Naive thymus-derived CD4-positive, alpha-beta T cell (primary cell): ENCODE measurements at regions of chr1 and their contacts with region 1.

Region 1: GRCh38 chr1:212291505-212292134 is 6.4 kb downstream of the PPP2R5A start:
- DNase-seq: peak in 7 of 9 donors; percentile 34 to 60 (median 43)
- ATAC-seq: peak; percentile 90
- H3K4me3 ChIP-seq: no peak overlapping the region
- H3K4me3 Mint-ChIP-seq: peak overlapping the region; percentile 30 to 98 (median 67)
- H3K27ac ChIP-seq: no peak overlapping the region
- H3K27ac Mint-ChIP-seq: peak overlapping the region in 7 of 9 donors; percentile 6 to 70 (median 38)
- H3K4me1 ChIP-seq: peaks cover 48 to 74% of the 10 kb centered on the region in 2 donors
- H3K4me1 Mint-ChIP-seq: peaks cover 55 to 91% (median 82%) of the 10 kb centered on the region in 7 donors
- H3K27me3 ChIP-seq: no peaks in the 10 kb centered on the region
- H3K27me3 Mint-ChIP-seq: no peaks in the 10 kb centered on the region

Region 2: DNA sequence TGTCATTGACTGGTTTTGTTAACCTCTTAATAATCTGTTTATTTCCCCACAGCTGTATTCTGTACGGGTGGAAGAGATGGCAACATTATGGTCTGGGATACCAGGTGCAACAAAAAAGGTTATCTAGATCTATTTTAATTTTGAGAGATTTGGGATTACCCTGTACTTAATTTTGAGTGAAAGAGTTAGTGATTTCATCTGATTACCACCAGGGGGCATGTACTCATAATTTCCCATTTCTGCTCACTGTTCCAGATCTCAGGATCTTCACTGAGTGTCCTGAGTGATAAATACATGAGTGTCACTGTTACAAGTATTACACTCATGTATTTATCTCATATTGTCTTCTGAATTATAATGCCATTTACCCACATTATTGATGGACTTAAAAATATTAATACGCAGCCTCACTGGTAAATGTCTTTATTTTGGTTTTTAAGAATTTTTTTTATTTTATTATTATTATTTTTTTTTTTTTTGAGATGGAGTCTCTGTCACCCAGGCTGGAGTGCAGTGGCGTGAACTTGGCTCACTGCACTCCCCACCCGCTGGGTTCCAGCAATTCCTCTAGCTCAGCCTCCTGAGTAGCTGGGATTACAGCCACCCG is 228.7 kb before region 1 on chr1:
- CTCF ChIA-PET with region 1: interaction called, 15 read pairs
- POLR2A ChIA-PET with region 1: interaction called, 5 read pairs
- intact Hi-C with region 1: loop called (anchors 1 to 2 kb)
- DNase-seq: peak in 6 of 9 donors; percentile 8 to 41 (median 33)
- ATAC-seq: peak; percentile 71
- H3K4me3 ChIP-seq: no peak overlapping the region
- H3K4me3 Mint-ChIP-seq: no peak overlapping the region
- H3K27ac ChIP-seq: no peak overlapping the region
- H3K27ac Mint-ChIP-seq: no peak overlapping the region
- H3K4me1 ChIP-seq: no peaks in the 10 kb centered on the region
- H3K4me1 Mint-ChIP-seq: peaks cover 0 to 11% (median 0%) of the 10 kb centered on the region in 7 donors
- H3K27me3 ChIP-seq: no peaks in the 10 kb centered on the region
- H3K27me3 Mint-ChIP-seq: no peaks in the 10 kb centered on the region

Region 3: GRCh38 chr1:212070720-212071302 is 220.8 kb before region 1 on chr1:
- CTCF ChIA-PET with region 1: interaction called, 50 read pairs
- POLR2A ChIA-PET with region 1: interaction called, 14 read pairs
- intact Hi-C with region 1: loop called (anchors 1 kb)
- DNase-seq: peak in 7 of 9 donors; percentile 11 to 63 (median 47)
- ATAC-seq: peak; percentile 66
- H3K4me3 ChIP-seq: no peak overlapping the region
- H3K4me3 Mint-ChIP-seq: no peak overlapping the region
- H3K27ac ChIP-seq: no peak overlapping the region
- H3K27ac Mint-ChIP-seq: no peak overlapping the region
- H3K4me1 ChIP-seq: no peaks in the 10 kb centered on the region
- H3K4me1 Mint-ChIP-seq: peaks cover 0 to 7% (median 0%) of the 10 kb centered on the region in 7 donors
- H3K27me3 ChIP-seq: no peaks in the 10 kb centered on the region
- H3K27me3 Mint-ChIP-seq: no peaks in the 10 kb centered on the region

Region 4: DNA sequence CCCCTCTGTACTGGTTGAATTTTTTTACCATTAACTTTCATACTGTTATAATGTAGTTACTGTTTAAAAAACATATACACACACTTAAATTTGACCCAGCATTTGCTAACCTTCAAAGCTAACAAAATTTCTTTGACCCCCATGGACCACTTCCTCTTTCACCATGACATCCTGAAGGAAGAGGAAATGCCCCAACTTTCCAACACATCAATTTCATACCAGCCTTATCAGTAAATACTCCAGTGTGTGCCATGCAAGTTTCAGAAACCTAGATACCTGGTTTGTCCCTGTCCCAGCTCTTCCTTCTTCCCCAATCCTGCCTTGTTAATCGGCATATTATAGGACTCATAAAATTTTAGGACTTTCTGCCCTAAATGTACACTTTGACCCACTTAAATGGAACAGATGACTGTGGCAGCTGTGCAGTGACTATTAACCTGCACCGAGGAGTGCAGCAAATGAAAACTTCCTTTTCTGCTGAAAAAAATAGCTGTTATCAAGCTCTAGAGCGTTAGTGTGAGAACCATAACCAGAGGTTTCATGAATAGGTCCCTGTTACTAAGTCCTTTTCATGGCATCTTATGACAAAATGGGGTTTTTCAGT is 202.0 kb before region 1 on chr1:
- CTCF ChIA-PET with region 1: no interaction called
- POLR2A ChIA-PET with region 1: no interaction called
- intact Hi-C with region 1: no loop called
- DNase-seq: no peak
- ATAC-seq: no peak
- H3K4me3 ChIP-seq: no peak overlapping the region
- H3K4me3 Mint-ChIP-seq: peak overlapping the region in 1 of 10 donors; percentile 0
- H3K27ac ChIP-seq: no peak overlapping the region
- H3K27ac Mint-ChIP-seq: peak overlapping the region in 3 of 9 donors; percentile 0 to 64 (median 5)
- H3K4me1 ChIP-seq: no peaks in the 10 kb centered on the region
- H3K4me1 Mint-ChIP-seq: peaks cover 6 to 25% (median 12%) of the 10 kb centered on the region in 7 donors
- H3K27me3 ChIP-seq: no peaks in the 10 kb centered on the region
- H3K27me3 Mint-ChIP-seq: no peaks in the 10 kb centered on the region

Region 5: GRCh38 chr1:212110617-212111016 is 181.0 kb before region 1 on chr1:
- CTCF ChIA-PET with region 1: no interaction called
- POLR2A ChIA-PET with region 1: no interaction called
- intact Hi-C with region 1: no loop called
- DNase-seq: no peak
- ATAC-seq: no peak
- H3K4me3 ChIP-seq: no peak overlapping the region
- H3K4me3 Mint-ChIP-seq: no peak overlapping the region
- H3K27ac ChIP-seq: no peak overlapping the region
- H3K27ac Mint-ChIP-seq: no peak overlapping the region
- H3K4me1 ChIP-seq: no peaks in the 10 kb centered on the region
- H3K4me1 Mint-ChIP-seq: peaks cover 0 to 14% (median 9%) of the 10 kb centered on the region in 7 donors
- H3K27me3 ChIP-seq: no peaks in the 10 kb centered on the region
- H3K27me3 Mint-ChIP-seq: no peaks in the 10 kb centered on the region

Region 6: GRCh38 chr1:212302745-212303383 is 11.2 kb after region 1 on chr1:
- CTCF ChIA-PET with region 1: no interaction called
- POLR2A ChIA-PET with region 1: interaction called, 5 read pairs
- intact Hi-C with region 1: loop called in 1 of 2 experiments (anchors 1 kb)
- DNase-seq: no peak
- ATAC-seq: no peak
- H3K4me3 ChIP-seq: no peak overlapping the region
- H3K4me3 Mint-ChIP-seq: peak overlapping the region in 4 of 10 donors; percentile 0 to 56 (median 25)
- H3K27ac ChIP-seq: no peak overlapping the region
- H3K27ac Mint-ChIP-seq: no peak overlapping the region
- H3K4me1 ChIP-seq: peaks cover 5 to 13% of the 10 kb centered on the region in 2 donors
- H3K4me1 Mint-ChIP-seq: peaks cover 25 to 71% (median 65%) of the 10 kb centered on the region in 7 donors
- H3K27me3 ChIP-seq: no peaks in the 10 kb centered on the region
- H3K27me3 Mint-ChIP-seq: no peaks in the 10 kb centered on the region

Region 7: GRCh38 chr1:212368073-212368484 is 76.5 kb after region 1 on chr1:
- CTCF ChIA-PET with region 1: no interaction called
- POLR2A ChIA-PET with region 1: no interaction called
- intact Hi-C with region 1: loop called (anchors 2 to 5 kb)
- DNase-seq: peak in 7 of 9 donors; percentile 34 to 67 (median 63)
- ATAC-seq: peak; percentile 95
- H3K4me3 ChIP-seq: no peak overlapping the region
- H3K4me3 Mint-ChIP-seq: no peak overlapping the region
- H3K27ac ChIP-seq: no peak overlapping the region
- H3K27ac Mint-ChIP-seq: peak overlapping the region in 4 of 9 donors; percentile 5 to 87 (median 52)
- H3K4me1 ChIP-seq: no peaks in the 10 kb centered on the region
- H3K4me1 Mint-ChIP-seq: peaks cover 0 to 9% (median 0%) of the 10 kb centered on the region in 7 donors
- H3K27me3 ChIP-seq: no peaks in the 10 kb centered on the region
- H3K27me3 Mint-ChIP-seq: no peaks in the 10 kb centered on the region